Activated T-helper 1 cell treated with anti-CD3 and anti-CD28 coated beads, Interleukin-12 subunit alpha, Interleukin-12 subunit beta, Interleukin-2, Interleukin-4 antibody, amounts not matched to agents 30 ng/mL and 10 ng/mL and 1 ng/mL, durations not matched to agents 14 hours and 24 hours and 36 hours (primary cell): ENCODE measurements at regions of chr5 and their contacts with region 1.

Region 1: DNA sequence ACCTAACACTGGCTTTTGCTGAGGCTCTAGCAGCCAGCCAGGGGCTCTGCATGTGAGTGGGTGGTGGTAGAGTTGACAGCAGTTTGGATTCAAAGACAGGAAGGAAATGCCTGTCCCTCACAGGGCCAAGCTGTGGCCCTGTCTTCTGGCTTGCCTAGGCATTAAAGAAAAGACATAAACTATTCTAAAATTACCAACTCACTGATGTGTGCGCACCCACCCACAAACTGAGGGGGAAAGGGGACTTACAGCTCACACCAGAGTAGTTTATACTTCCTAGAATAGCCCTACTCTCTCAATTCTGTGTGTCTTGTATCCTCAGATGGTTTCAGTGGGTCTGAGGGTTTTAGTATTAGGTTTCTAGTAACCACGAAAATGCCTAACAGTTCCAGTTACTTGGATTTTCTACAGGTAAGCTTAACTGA is 18.3 kb upstream of the IL13 start:
- DNase-seq: no peak
- H3K4me3 Mint-ChIP-seq: peak overlapping the region; percentile 30
- H3K27ac Mint-ChIP-seq: peak overlapping the region; percentile 86
- H3K4me1 Mint-ChIP-seq: peaks cover 83% of the 10 kb centered on the region
- H3K27me3 Mint-ChIP-seq: no peaks in the 10 kb centered on the region

Region 2: DNA sequence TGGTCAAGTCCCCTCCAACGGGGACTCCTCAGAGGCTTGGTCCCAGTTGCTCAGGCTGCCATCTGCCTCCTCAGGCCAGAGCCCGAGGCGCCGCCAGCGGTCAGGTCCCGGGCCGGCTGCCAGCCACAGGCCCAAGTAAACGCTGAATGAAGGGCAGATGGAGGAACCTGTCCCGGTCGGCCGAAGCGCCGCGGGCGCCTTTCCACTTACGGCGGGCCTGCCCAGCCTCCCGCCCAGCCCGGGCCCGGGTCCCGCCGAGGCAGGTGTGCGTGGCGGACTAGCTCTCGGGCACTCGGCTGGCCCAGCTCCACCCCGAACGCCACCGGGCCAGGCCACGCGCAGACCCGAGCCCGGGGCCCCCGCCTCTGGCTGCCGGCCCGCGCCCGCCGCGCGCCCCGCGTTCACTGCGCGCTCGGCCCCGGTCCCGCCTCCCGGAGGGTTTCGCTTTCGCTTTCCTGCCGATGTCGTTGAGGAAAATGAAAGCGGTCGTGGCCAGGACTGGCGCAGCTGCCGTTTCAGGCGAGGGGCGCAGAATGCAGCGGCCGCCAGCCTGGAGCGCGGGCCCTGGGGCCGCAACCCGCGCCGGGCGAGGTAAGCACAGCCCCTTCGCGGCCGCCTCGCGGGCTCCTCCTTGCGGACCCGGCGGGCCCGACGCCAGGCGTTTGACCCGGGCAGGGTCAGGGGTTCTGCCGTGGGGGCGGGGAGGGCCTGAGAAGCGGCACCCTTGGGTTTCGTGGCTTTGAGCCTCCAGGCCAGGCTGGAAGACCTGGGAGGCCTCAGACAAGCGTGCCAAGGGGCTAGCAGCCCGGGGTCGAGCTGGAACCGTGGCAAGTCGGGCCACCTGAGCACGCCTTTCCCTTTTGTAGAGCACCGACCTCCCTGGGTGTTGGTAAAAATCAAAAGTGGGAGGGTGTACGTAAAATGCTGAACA is 229.0 kb before region 1 on chr5:
- intact Hi-C with region 1: loop called (anchors 5 kb)
- DNase-seq: peak; percentile 90
- H3K4me3 Mint-ChIP-seq: peak overlapping the region; percentile 99
- H3K27ac Mint-ChIP-seq: peak overlapping the region; percentile 100
- H3K4me1 Mint-ChIP-seq: peaks cover 81% of the 10 kb centered on the region
- H3K27me3 Mint-ChIP-seq: no peaks in the 10 kb centered on the region

Region 3: DNA sequence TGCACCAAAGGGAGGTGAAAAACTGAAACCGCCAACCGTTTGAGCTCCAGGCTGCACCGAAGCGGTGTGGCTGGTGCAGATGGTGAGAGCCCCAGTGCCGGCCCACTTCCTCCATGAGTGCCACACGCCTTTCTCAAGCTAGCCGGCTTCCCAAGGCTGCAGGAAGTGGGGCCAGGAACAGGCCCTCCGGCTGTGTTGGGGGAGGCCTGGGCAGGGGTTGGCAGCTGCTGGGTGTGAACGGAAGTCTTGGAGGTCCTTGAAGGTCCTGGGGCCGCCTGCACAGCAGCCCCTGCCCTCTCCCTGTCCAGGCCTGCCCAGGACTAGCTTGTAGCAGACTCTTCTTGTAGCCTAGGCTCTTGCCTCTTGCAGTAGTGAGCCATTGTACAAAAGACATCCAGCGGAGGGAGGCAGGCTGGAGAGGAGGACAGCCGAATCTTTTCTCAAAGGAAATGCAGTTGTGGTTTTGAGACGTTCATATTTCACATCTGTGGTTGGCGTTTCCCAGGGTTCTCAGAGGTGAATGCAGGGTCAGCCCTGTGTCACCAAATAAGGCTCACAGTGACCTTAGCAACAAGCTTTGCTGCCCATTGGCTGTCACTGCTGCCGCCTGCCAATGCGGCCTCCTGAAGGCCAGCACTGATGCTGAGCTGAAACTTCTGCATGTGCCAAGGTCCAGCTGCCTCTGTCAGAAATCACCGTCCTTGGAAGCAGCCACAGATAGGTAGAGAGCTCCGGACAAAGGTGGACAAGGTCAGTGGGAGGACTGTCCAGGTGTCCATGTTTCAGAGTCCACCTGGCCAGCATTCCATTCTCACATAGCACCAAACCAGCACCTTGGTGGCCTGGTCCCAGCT is 173.1 kb before region 1 on chr5:
- intact Hi-C with region 1: no loop called
- DNase-seq: peak; percentile 71
- H3K4me3 Mint-ChIP-seq: peak overlapping the region; percentile 77
- H3K27ac Mint-ChIP-seq: peak overlapping the region; percentile 97
- H3K4me1 Mint-ChIP-seq: peaks cover 94% of the 10 kb centered on the region
- H3K27me3 Mint-ChIP-seq: no peaks in the 10 kb centered on the region

Region 4: DNA sequence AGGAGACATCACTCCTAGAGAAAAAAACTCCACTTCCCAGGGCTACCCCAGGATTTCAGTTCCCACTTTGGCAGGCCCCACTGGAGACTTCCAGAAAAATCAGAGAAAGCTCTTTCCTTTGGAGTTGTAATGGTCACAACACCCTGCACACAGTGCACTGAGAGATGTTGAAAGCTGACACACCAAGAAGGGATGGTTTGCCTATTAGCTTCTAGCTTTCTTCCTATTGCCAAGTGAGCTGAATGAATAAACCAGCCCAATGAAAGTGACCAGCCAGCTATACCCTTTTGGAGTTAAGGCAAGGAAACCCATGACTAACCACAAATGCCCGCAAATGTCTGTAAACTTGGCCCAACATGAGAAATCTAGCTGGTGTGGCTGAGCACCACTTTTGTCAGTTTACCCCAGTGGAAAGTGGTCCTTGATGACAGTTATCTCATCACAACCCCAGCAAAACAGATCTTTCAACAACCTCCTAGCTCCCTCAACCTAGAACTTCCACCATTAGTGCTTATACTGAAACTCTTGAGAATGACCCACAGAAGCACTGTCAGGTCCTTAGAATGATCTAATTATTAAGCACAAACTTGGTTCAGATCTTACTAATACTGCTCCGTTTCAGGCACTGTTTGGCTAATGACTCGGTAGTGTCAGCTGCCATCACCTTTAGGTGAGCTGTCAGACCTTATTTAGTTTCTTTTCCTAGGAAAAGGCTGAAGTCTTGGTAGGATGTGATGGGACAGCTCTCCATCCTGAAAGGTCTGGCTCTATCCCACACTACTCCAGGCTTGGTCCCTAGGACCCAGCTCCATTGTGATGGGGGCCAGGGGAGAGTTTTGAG is 160.4 kb before region 1 on chr5:
- intact Hi-C with region 1: no loop called
- DNase-seq: no peak
- H3K4me3 Mint-ChIP-seq: no peak overlapping the region
- H3K27ac Mint-ChIP-seq: peak overlapping the region; percentile 48
- H3K4me1 Mint-ChIP-seq: peaks cover 69% of the 10 kb centered on the region
- H3K27me3 Mint-ChIP-seq: no peaks in the 10 kb centered on the region

Region 5: GRCh38 chr5:132556763-132557477 is 82.8 kb before region 1 on chr5 and contains the start of gene RAD50:
- intact Hi-C with region 1: loop called (anchors 1 kb)
- DNase-seq: peak; percentile 92
- H3K4me3 Mint-ChIP-seq: peak within 1 kb of the TSS; percentile 98
- H3K27ac Mint-ChIP-seq: peak within 1 kb of the TSS; percentile 91
- H3K4me1 Mint-ChIP-seq: peaks cover 32% of the 10 kb centered on the region
- H3K27me3 Mint-ChIP-seq: peaks cover 4% of the 10 kb centered on the region
- total RNA-seq, gene RAD50: 30.9 and 33.0 TPM in 2 replicates

Region 6: GRCh38 chr5:132655821-132656773 is 16.4 kb after region 1 on chr5:
- intact Hi-C with region 1: loop called (anchors 1 kb)
- DNase-seq: no peak
- H3K4me3 Mint-ChIP-seq: peak overlapping the region; percentile 76
- H3K27ac Mint-ChIP-seq: peak overlapping the region; percentile 87
- H3K4me1 Mint-ChIP-seq: peaks cover 71% of the 10 kb centered on the region
- H3K27me3 Mint-ChIP-seq: peaks cover 19% of the 10 kb centered on the region

Region 7: GRCh38 chr5:132714456-132715307 is 75.0 kb after region 1 on chr5:
- intact Hi-C with region 1: loop called (anchors 1 kb)
- DNase-seq: no peak
- H3K4me3 Mint-ChIP-seq: peak overlapping the region; percentile 43
- H3K27ac Mint-ChIP-seq: no peak overlapping the region
- H3K4me1 Mint-ChIP-seq: peaks cover 15% of the 10 kb centered on the region
- H3K27me3 Mint-ChIP-seq: no peaks in the 10 kb centered on the region

Region 8: DNA sequence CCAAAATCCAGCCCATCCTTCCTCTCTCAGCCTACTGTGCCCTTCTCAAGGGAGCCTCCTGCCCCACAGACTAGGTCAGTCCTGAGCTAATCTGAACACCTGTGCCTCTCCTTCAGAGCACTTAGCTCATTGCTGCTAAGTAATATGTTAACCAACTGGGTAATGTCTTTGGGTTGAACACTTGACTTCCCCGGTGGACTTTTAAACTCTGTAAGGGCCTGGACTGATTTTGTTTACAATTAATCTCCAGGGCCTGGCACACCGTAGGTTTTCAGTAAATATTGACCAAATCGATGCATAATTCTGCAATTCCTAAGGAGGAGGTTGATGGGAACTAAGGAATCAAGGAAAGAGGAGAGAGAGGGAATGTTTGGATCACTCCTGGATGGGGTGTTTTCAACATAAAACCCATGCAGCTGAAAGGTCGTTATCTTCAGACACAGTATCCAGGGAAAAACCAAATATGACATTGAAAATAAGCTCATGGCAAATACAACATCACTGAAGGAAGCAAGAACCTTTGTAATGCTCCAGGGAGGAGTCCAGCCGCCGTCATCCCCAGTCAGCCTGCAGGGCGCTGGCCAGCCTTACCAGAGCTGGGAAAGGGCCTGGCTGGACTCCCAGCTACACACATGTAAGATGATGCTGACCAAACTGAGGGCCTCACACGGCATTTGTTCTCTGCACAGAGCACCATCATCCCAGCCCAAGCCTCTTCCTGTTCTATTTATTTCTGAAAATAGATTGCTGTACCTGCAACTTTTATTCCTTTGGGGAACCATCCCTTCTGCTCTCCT is 1162.4 kb after region 1 on chr5:
- intact Hi-C with region 1: no loop called
- DNase-seq: no peak
- H3K4me3 Mint-ChIP-seq: no peak overlapping the region
- H3K27ac Mint-ChIP-seq: no peak overlapping the region
- H3K4me1 Mint-ChIP-seq: no peaks in the 10 kb centered on the region
- H3K27me3 Mint-ChIP-seq: peaks cover 2% of the 10 kb centered on the region